ENCODE measurements at regions of chr16 and their contacts with region 1.

Region 1: GRCh38 chr16:3234543-3235541 is at the start of gene ZNF200:
- DNase-seq: peak; percentile 91
- ATAC-seq: peak; percentile 97
- H3K4me3 ChIP-seq: peak within 1 kb of the TSS; percentile 86 to 99 (median 98)
- H3K27ac ChIP-seq: peak within 1 kb of the TSS; percentile 91
- H3K4me1 ChIP-seq: peaks cover 22% of the 10 kb centered on the region
- H3K27me3 ChIP-seq: no peaks in the 10 kb centered on the region; a peak in 1 of 5 replicates
- CTCF ChIP-seq: no peak
- EP300 ChIP-seq: no peak
- POLR2A ChIP-seq: peak; percentile 85 to 93
- RAD21 ChIP-seq: no peak; the same call in 1 of the 2 replicates
- total RNA-seq, gene ZNF200: 16.5 and 18.0 TPM in 2 replicates

Region 2: DNA sequence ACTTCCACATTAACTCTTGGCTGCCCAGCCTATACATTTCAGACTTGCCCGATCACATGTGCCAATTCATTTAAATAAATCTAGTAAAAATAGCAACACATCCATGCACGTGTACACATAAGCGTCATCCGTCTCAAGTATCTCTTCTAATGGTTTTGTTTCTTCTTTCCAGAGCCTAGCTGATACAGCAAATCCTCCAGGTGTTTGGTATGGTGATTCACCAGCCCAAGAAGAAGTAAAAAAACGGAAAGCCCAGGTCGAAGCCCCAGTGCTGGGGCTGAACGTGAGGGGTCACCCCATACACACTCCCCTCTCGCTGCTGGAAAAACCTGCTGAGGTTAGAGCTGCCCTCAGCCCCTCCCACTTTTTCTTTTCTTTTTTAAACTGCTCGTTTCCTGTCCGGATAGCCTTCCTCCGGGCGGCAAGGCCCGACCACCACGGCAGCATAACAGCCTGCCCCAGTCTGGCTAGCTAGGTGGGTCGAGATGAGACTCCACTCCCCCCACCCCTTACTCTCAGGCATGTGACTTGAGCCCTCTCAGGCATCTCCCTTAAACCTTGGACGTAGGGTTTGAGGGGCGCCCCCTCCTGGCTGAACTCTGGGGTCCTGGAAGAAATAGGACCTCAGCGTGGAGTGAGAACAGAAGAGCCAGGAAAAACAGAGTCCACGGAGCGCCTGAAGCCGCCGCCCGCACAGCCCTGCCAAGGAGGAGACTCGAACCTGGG is 60.8 kb before region 1 on chr16:
- CTCF ChIA-PET with region 1: no interaction called
- POLR2A ChIA-PET with region 1: no interaction called
- in situ Hi-C with region 1: no loop called
- intact Hi-C with region 1: no loop called
- DNase-seq: peak; percentile 65
- ATAC-seq: no peak
- H3K4me3 ChIP-seq: peak overlapping the region; percentile 5 to 71 (median 50)
- H3K27ac ChIP-seq: no peak overlapping the region
- H3K4me1 ChIP-seq: peaks cover 50% of the 10 kb centered on the region
- H3K27me3 ChIP-seq: peaks cover 0 to under 1% of the 10 kb centered on the region in 2 experiments; a peak in 1 of 5 replicates
- CTCF ChIP-seq: peak; percentile 72
- EP300 ChIP-seq: no peak
- POLR2A ChIP-seq: no peak
- RAD21 ChIP-seq: no peak

Region 3: DNA sequence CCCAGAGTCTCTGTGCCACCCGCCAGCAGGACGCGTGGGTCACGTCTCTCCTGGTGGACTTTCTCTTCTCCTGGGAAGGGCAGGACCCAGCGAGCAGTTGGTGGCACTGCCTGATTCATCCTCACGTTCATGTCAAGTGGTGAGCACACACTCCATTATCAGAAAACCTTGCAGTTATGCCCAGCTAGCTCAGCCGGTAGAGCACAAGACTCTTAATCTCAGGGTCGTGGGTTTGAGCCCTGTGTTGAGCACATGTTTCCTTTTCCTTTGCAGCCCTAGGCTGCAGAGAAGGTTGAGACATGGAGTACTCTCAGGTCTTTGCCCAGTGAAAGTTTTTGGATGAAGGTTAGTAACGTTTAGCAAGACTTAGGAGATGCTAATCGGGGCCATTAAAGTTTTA is 38.9 kb before region 1 on chr16:
- CTCF ChIA-PET with region 1: no interaction called
- POLR2A ChIA-PET with region 1: no interaction called
- in situ Hi-C with region 1: no loop called
- intact Hi-C with region 1: no loop called
- DNase-seq: peak; percentile 33
- ATAC-seq: no peak
- H3K4me3 ChIP-seq: peak overlapping the region in 1 of 3 experiments; percentile 36; a peak in 1 of 6 replicates
- H3K27ac ChIP-seq: no peak overlapping the region
- H3K4me1 ChIP-seq: peaks cover 52% of the 10 kb centered on the region
- H3K27me3 ChIP-seq: no peaks in the 10 kb centered on the region
- CTCF ChIP-seq: no peak
- EP300 ChIP-seq: no peak
- POLR2A ChIP-seq: no peak
- RAD21 ChIP-seq: no peak

Region 4: GRCh38 chr16:3207086-3207953 is 27.5 kb before region 1 on chr16:
- CTCF ChIA-PET with region 1: no interaction called
- POLR2A ChIA-PET with region 1: interaction called, 11 read pairs
- in situ Hi-C with region 1: no loop called
- intact Hi-C with region 1: no loop called
- DNase-seq: peak; percentile 64
- ATAC-seq: peak; percentile 94
- H3K4me3 ChIP-seq: peak overlapping the region; percentile 45 to 71 (median 52)
- H3K27ac ChIP-seq: peak overlapping the region; percentile 77
- H3K4me1 ChIP-seq: peaks cover 31% of the 10 kb centered on the region
- H3K27me3 ChIP-seq: 0 out of 5 replicates have a peak, but pooled peaks cover 0 to 2% of the 10 kb centered on the region in 2 experiments
- CTCF ChIP-seq: no peak
- EP300 ChIP-seq: no peak
- POLR2A ChIP-seq: peak; percentile 27 to 59; a peak in 1 of 4 replicates
- RAD21 ChIP-seq: no peak

Region 5: DNA sequence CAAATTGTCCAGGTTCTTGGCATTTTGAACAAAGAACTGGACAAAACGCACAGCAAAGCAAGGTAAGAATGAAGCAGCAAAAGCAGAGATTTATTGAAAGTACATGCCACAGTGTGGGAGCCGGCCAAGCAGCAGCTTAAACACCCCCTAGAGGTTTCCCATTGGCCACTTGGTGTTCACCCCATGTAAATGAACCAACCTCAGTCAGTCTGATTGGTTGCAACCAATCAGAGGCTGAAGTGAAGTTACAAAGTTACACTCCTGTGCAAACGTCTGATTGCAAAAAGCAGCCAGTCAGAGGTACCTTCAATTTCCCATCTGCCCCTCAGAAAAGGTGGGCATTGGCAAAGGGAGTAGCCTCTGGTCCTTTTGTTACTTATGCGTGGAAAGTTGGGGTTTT is 39.6 kb after region 1 on chr16:
- CTCF ChIA-PET with region 1: no interaction called
- POLR2A ChIA-PET with region 1: no interaction called
- in situ Hi-C with region 1: no loop called
- intact Hi-C with region 1: no loop called
- DNase-seq: peak; percentile 91
- ATAC-seq: peak; percentile 100
- H3K4me3 ChIP-seq: peak overlapping the region; percentile 43 to 60 (median 52)
- H3K27ac ChIP-seq: peak overlapping the region; percentile 89
- H3K4me1 ChIP-seq: peaks cover 52% of the 10 kb centered on the region
- H3K27me3 ChIP-seq: no peaks in the 10 kb centered on the region; a peak in 1 of 5 replicates
- CTCF ChIP-seq: no peak
- EP300 ChIP-seq: 0 out of 4 replicates have a peak, but pooled peaks of 1 of the 2 experiments have one; percentile 13
- POLR2A ChIP-seq: peak; percentile 48 to 84; a peak in 3 of 4 replicates
- RAD21 ChIP-seq: no peak